ENCODE measurements at regions of chr17 and their contacts with region 1.

Region 1: GRCh38 chr17:17919169-17920107 is 52.8 kb downstream of the TOM1L2 start:
- DNase-seq: peak; percentile 75
- H3K4me3 ChIP-seq: no peak overlapping the region
- H3K27ac ChIP-seq: no peak overlapping the region
- H3K4me1 ChIP-seq: peaks cover 8% of the 10 kb centered on the region
- CTCF ChIP-seq: peak; percentile 97

Region 2: GRCh38 chr17:17729620-17730249 is 189.7 kb before region 1 on chr17:
- CTCF ChIA-PET with region 1: no interaction called
- POLR2A ChIA-PET with region 1: no interaction called
- intact Hi-C with region 1: loop called (anchors 1 kb)
- DNase-seq: peak; percentile 71
- H3K4me3 ChIP-seq: no peak overlapping the region
- H3K27ac ChIP-seq: no peak overlapping the region
- H3K4me1 ChIP-seq: peaks cover 10% of the 10 kb centered on the region
- CTCF ChIP-seq: peak; percentile 81

Region 3: GRCh38 chr17:17812211-17813057 is 107.0 kb before region 1 on chr17:
- CTCF ChIA-PET with region 1: no interaction called
- POLR2A ChIA-PET with region 1: no interaction called
- intact Hi-C with region 1: loop called (anchors 2 kb)
- DNase-seq: peak; percentile 60
- H3K4me3 ChIP-seq: no peak overlapping the region
- H3K27ac ChIP-seq: no peak overlapping the region
- H3K4me1 ChIP-seq: peaks cover 20% of the 10 kb centered on the region
- CTCF ChIP-seq: peak; percentile 96

Region 4: GRCh38 chr17:17859909-17860765 is 59.3 kb before region 1 on chr17:
- CTCF ChIA-PET with region 1: no interaction called
- POLR2A ChIA-PET with region 1: interaction called, 4 read pairs
- intact Hi-C with region 1: loop called (anchors 5 kb)
- DNase-seq: peak; percentile 73
- H3K4me3 ChIP-seq: no peak overlapping the region
- H3K27ac ChIP-seq: no peak overlapping the region
- H3K4me1 ChIP-seq: no peaks in the 10 kb centered on the region
- CTCF ChIP-seq: peak; percentile 98

Region 5: GRCh38 chr17:17890773-17891759 is 28.4 kb before region 1 on chr17:
- CTCF ChIA-PET with region 1: interaction called, 6 read pairs
- POLR2A ChIA-PET with region 1: interaction called, 3 read pairs
- intact Hi-C with region 1: loop called (anchors 2 kb)
- DNase-seq: peak; percentile 43
- H3K4me3 ChIP-seq: no peak overlapping the region
- H3K27ac ChIP-seq: no peak overlapping the region
- H3K4me1 ChIP-seq: peaks cover 7% of the 10 kb centered on the region
- CTCF ChIP-seq: peak; percentile 61